ENCODE measurements at regions of chr7 and their contacts with region 1.

Region 1: DNA sequence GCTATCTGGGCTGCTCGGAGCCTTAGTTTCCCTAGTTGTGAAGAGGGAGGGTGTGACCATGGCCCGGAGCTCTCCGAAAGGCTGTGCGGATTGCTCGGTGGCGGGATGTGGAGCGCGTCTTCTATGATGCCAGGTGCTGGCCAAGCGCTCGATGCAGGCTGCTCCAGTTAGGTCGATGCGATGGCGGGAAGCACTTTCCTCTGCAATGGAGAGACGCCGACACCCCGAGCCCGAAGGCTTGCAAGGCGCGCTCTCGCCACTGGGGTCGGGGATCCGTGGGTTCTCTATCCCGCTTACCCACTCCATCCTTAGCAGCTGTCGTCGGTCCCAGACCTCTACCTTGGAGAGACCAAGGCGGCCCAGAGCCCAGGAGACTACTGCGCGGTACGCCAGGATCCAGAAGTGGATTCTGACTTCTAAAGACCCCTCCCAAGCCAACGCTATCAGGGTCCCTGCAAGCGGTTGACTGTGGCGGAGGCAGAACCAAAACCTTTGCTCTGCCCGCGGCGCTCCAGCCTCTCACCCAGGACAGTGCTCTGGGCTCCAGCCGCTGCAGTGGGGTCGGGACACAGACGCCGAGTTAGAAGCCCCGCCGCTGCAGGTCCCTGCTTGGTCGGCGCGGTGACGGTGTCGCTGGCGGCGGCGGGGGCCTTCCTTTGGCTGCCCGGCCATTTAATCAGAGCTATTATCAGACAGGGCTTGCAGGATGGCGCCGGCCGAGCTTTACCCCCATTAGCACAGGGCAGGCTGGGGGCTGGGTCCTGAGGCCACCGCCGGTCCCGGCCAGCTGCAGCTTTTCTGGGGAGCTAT is 7.8 kb upstream of the TBX20 start:
- DNase-seq: peak; percentile 63
- ATAC-seq: peak; percentile 53
- H3K4me3 Mint-ChIP-seq: peak overlapping the region; percentile 71
- H3K27ac Mint-ChIP-seq: no peak overlapping the region
- H3K4me1 Mint-ChIP-seq: peaks cover 39% of the 10 kb centered on the region
- H3K27me3 Mint-ChIP-seq: peaks cover 92% of the 10 kb centered on the region
- CTCF ChIP-seq: no peak

Region 2: DNA sequence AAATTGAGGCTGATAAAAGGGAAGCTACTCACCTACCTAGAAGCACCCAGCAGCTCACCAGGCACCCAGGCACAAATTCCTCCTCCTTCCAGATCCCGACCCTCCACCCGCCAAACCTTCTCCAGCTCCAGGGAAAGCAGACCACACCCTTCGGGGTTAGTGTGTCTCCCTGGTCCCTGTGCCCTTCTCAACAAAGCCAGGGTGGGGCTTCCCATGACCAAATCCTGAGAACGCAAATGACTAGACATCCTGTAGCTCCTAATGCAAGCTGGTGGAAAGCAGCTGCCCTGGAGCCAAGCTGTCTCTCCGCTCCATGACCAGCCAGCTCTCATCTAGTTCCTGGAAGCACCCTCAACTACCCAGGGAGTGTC is 12.2 kb before region 1 on chr7:
- CTCF ChIA-PET with region 1: interaction called, 11 read pairs
- POLR2A ChIA-PET with region 1: interaction called, 5 read pairs
- DNase-seq: peak; percentile 47
- ATAC-seq: peak; percentile 57
- H3K4me3 Mint-ChIP-seq: peak overlapping the region; percentile 84
- H3K27ac Mint-ChIP-seq: no peak overlapping the region
- H3K4me1 Mint-ChIP-seq: peaks cover 43% of the 10 kb centered on the region
- H3K27me3 Mint-ChIP-seq: peaks cover 88% of the 10 kb centered on the region
- CTCF ChIP-seq: no peak

Region 3: GRCh38 chr7:35272234-35272633 is 10.6 kb after region 1 on chr7:
- CTCF ChIA-PET with region 1: no interaction called
- POLR2A ChIA-PET with region 1: no interaction called
- DNase-seq: no peak
- ATAC-seq: no peak
- H3K4me3 Mint-ChIP-seq: no peak overlapping the region
- H3K27ac Mint-ChIP-seq: no peak overlapping the region
- H3K4me1 Mint-ChIP-seq: peaks cover 6% of the 10 kb centered on the region; the same call in 1 of the 2 replicates
- H3K27me3 Mint-ChIP-seq: no peaks in the 10 kb centered on the region; the same call in 1 of the 2 replicates
- CTCF ChIP-seq: no peak